Caco-2 (cell line): ENCODE measurements at regions of chr19 and their contacts with region 1.

Region 1: DNA sequence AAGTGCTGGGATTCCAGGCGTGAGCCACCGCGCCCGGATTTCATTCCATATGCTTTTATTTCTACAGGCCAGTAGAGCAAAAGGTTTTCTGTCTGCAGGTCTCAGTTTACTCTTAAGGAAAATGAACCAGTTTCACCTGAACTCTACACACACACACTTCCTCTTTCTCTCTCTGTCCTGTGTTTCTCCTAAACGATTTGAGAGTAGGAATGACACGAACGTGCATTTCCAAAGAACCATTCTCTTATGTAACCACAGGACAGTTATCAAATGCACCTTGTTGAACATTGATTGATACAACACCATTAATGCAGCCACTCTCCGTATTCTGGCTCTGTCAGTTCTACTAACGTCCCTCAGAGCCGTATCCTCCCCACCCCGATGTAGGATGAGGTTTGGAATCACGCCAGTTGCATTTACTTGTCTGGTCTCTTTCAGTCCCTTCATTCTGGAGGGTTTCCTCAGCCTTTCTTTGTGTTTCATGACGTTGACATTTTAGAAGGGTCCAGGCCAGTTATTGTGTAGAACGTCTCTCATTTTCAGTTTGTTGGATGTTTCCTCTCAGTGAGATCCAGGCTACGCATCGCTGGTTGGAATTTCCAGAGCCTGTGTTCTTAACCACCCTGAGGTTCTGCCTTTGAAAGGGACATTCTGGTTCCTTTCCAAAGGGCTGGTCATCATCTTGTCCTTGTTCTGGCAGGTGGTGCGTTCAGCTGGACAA is 36.0 kb downstream of the BICRA start:
- DNase-seq: no peak
- H3K4me3 ChIP-seq: no peak overlapping the region
- H3K4me3 Mint-ChIP-seq: peak overlapping the region; percentile 41
- H3K27ac Mint-ChIP-seq: peak overlapping the region; percentile 99
- H3K4me1 ChIP-seq: peaks cover 57% of the 10 kb centered on the region
- H3K4me1 Mint-ChIP-seq: peaks cover 39% of the 10 kb centered on the region
- H3K27me3 ChIP-seq: no peaks in the 10 kb centered on the region
- H3K27me3 Mint-ChIP-seq: no peaks in the 10 kb centered on the region
- CTCF ChIP-seq: no peak

Region 2: GRCh38 chr19:47589824-47590223 is 55.1 kb before region 1 on chr19:
- CTCF ChIA-PET with region 1: no interaction called
- POLR2A ChIA-PET with region 1: no interaction called
- intact Hi-C with region 1: no loop called
- DNase-seq: no peak
- H3K4me3 ChIP-seq: no peak overlapping the region
- H3K4me3 Mint-ChIP-seq: no peak overlapping the region
- H3K27ac Mint-ChIP-seq: no peak overlapping the region
- H3K4me1 ChIP-seq: no peaks in the 10 kb centered on the region
- H3K4me1 Mint-ChIP-seq: no peaks in the 10 kb centered on the region
- H3K27me3 ChIP-seq: no peaks in the 10 kb centered on the region
- H3K27me3 Mint-ChIP-seq: no peaks in the 10 kb centered on the region
- CTCF ChIP-seq: no peak

Region 3: GRCh38 chr19:47608074-47608918 is 36.6 kb before region 1 on chr19:
- CTCF ChIA-PET with region 1: interaction called, 10 read pairs
- POLR2A ChIA-PET with region 1: interaction called, 19 read pairs
- intact Hi-C with region 1: loop called (anchors 1 kb)
- DNase-seq: peak; percentile 94 to 99
- H3K4me3 ChIP-seq: peak overlapping the region; percentile 99
- H3K4me3 Mint-ChIP-seq: peak overlapping the region; percentile 91
- H3K27ac Mint-ChIP-seq: peak overlapping the region; percentile 91
- H3K4me1 ChIP-seq: peaks cover 27% of the 10 kb centered on the region
- H3K4me1 Mint-ChIP-seq: peaks cover 11% of the 10 kb centered on the region
- H3K27me3 ChIP-seq: no peaks in the 10 kb centered on the region
- H3K27me3 Mint-ChIP-seq: no peaks in the 10 kb centered on the region
- CTCF ChIP-seq: peak in 1 of 2 experiments; percentile 29

Region 4: GRCh38 chr19:47623921-47624391 is 21.0 kb before region 1 on chr19:
- CTCF ChIA-PET with region 1: interaction called, 20 read pairs
- POLR2A ChIA-PET with region 1: interaction called, 62 read pairs
- intact Hi-C with region 1: loop called (anchors 1 kb)
- DNase-seq: peak; percentile 94 to 96
- H3K4me3 ChIP-seq: no peak overlapping the region
- H3K4me3 Mint-ChIP-seq: peak overlapping the region; percentile 67
- H3K27ac Mint-ChIP-seq: peak overlapping the region; percentile 84
- H3K4me1 ChIP-seq: peaks cover 82% of the 10 kb centered on the region
- H3K4me1 Mint-ChIP-seq: peaks cover 50% of the 10 kb centered on the region
- H3K27me3 ChIP-seq: no peaks in the 10 kb centered on the region
- H3K27me3 Mint-ChIP-seq: no peaks in the 10 kb centered on the region
- CTCF ChIP-seq: no peak

Region 5: GRCh38 chr19:47657719-47658118 is 12.8 kb after region 1 on chr19:
- CTCF ChIA-PET with region 1: interaction called, 10 read pairs
- POLR2A ChIA-PET with region 1: interaction called, 10 read pairs
- intact Hi-C with region 1: loop called (anchors 1 kb)
- DNase-seq: peak; percentile 80 to 87
- H3K4me3 ChIP-seq: no peak overlapping the region
- H3K4me3 Mint-ChIP-seq: peak overlapping the region; percentile 57
- H3K27ac Mint-ChIP-seq: peak overlapping the region; percentile 94
- H3K4me1 ChIP-seq: peaks cover 64% of the 10 kb centered on the region
- H3K4me1 Mint-ChIP-seq: peaks cover 56% of the 10 kb centered on the region
- H3K27me3 ChIP-seq: no peaks in the 10 kb centered on the region
- H3K27me3 Mint-ChIP-seq: no peaks in the 10 kb centered on the region
- CTCF ChIP-seq: no peak

Region 6: GRCh38 chr19:47697863-47698609 is 53.1 kb after region 1 on chr19:
- CTCF ChIA-PET with region 1: interaction called, 3 read pairs
- POLR2A ChIA-PET with region 1: no interaction called
- intact Hi-C with region 1: loop called (anchors 5 kb)
- DNase-seq: peak; percentile 84 to 87
- H3K4me3 ChIP-seq: no peak overlapping the region
- H3K4me3 Mint-ChIP-seq: no peak overlapping the region
- H3K27ac Mint-ChIP-seq: peak overlapping the region; percentile 56
- H3K4me1 ChIP-seq: peaks cover 6% of the 10 kb centered on the region
- H3K4me1 Mint-ChIP-seq: no peaks in the 10 kb centered on the region
- H3K27me3 ChIP-seq: no peaks in the 10 kb centered on the region
- H3K27me3 Mint-ChIP-seq: no peaks in the 10 kb centered on the region
- CTCF ChIP-seq: peak; percentile 99